ENCODE measurements at regions of chr1 and their contacts with region 1.

Region 1: DNA sequence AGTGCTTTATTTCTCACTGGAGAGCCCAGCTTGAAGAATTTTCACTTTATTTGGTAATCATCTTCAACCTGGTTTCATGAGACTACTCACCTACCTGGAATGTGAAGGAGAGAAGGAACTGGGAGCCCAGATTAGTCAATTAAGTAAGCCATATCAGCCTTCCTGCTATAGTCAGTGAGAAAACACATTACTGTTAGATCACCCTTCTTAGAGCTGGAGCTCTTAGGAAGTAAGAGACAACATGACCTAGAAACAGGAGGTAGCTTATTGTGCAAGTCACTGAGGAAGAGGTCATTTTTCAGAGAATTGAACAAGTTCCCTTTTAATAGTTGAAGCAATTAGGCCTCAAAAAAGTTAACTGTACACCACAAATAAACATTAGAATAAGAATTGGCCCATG is 49.2 kb upstream of the TEKT2 start:
- DNase-seq: no peak
- H3K4me3 ChIP-seq: no peak overlapping the region
- H3K27ac ChIP-seq: no peak overlapping the region
- H3K4me1 ChIP-seq: no peaks in the 10 kb centered on the region
- H3K27me3 ChIP-seq: no peaks in the 10 kb centered on the region
- CTCF ChIP-seq: no peak

Region 2: DNA sequence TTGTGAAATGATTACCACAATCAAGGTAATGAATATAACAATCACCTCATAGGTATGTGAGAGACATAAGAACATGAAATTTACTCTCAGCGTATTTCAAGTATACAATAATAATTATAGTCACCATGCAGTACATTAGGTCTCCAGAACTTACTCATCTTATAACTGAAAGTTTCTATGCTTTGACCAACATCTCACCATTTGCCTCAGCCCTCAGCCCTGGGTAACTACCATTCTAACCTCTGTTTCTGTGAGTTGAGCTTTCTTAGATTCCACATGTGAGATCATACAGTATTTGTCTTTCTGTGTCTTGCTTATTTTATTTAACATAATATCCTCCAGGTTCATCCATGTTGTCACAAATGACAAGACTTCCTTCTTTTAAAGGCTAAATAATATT is 46.5 kb before region 1 on chr1:
- intact Hi-C with region 1: loop called (anchors 1 kb)
- DNase-seq: no peak
- H3K4me3 ChIP-seq: no peak overlapping the region
- H3K27ac ChIP-seq: no peak overlapping the region
- H3K4me1 ChIP-seq: no peaks in the 10 kb centered on the region
- H3K27me3 ChIP-seq: no peaks in the 10 kb centered on the region
- CTCF ChIP-seq: no peak